IMR-90 (cell line): ENCODE measurements at regions of chr9 and their contacts with region 1.

Region 1: DNA sequence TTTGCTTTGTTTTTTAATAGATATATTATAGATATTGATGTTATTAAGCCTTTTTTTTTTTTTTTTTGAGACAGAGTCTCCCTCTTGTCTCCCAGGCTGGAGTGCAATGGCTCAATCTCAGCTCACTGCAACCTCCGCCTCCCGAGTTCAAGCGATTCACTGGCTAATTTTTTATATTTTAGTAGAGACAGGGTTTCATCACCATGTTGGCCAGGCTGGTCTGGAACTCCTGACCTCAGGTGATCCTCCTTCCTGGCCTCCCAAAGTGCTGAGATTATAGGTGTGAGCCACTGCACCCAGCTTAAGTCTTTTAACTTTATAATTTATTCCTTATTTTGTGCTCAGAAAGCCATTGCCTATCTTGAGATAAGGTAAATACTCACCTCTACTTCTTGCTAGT is 24.2 kb upstream of the RAD23B start:
- DNase-seq: no peak
- ATAC-seq: no peak
- H3K4me3 ChIP-seq: no peak overlapping the region
- H3K27ac ChIP-seq: no peak overlapping the region
- H3K4me1 ChIP-seq: peaks cover 3% of the 10 kb centered on the region
- H3K27me3 ChIP-seq: no peaks in the 10 kb centered on the region
- CTCF ChIP-seq: no peak
- POLR2A ChIP-seq: no peak
- RAD21 ChIP-seq: no peak

Region 2: GRCh38 chr9:106769331-106769730 is 489.6 kb before region 1 on chr9:
- CTCF ChIA-PET with region 1: no interaction called
- POLR2A ChIA-PET with region 1: interaction called, 12 read pairs
- dilution Hi-C with region 1: no loop called
- in situ Hi-C with region 1: no loop called
- intact Hi-C with region 1: no loop called
- DNase-seq: no peak
- ATAC-seq: no peak
- H3K4me3 ChIP-seq: no peak overlapping the region
- H3K27ac ChIP-seq: no peak overlapping the region
- H3K4me1 ChIP-seq: no peaks in the 10 kb centered on the region
- H3K27me3 ChIP-seq: peaks cover 2% of the 10 kb centered on the region
- CTCF ChIP-seq: no peak
- POLR2A ChIP-seq: no peak
- RAD21 ChIP-seq: no peak

Region 3: DNA sequence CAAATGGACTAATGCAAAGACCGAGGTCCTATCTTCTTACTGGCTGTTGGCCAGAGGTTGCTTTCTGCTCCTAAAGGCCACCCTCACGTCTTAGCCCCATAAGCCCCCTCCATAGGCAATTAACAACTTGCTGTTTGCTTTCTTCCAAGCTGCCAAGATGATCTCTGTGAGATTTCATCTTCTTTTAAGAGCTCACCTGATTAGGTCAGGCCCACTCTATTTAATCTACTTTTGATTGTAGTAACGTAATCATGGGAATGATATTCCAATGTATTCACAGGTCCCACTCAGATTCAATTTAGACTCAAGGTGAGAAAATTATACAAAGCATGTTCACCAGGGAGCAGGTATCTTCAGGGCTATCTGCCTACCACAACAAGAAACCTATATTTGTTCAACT is 60.2 kb before region 1 on chr9:
- CTCF ChIA-PET with region 1: no interaction called
- POLR2A ChIA-PET with region 1: no interaction called
- dilution Hi-C with region 1: no loop called
- in situ Hi-C with region 1: no loop called
- intact Hi-C with region 1: no loop called
- DNase-seq: no peak
- ATAC-seq: no peak
- H3K4me3 ChIP-seq: no peak overlapping the region
- H3K27ac ChIP-seq: no peak overlapping the region
- H3K4me1 ChIP-seq: no peaks in the 10 kb centered on the region
- H3K27me3 ChIP-seq: peaks cover 2% of the 10 kb centered on the region
- CTCF ChIP-seq: no peak
- POLR2A ChIP-seq: no peak
- RAD21 ChIP-seq: no peak

Region 4: GRCh38 chr9:107280520-107280919 is 21.6 kb after region 1 on chr9:
- CTCF ChIA-PET with region 1: no interaction called
- POLR2A ChIA-PET with region 1: no interaction called
- dilution Hi-C with region 1: no loop called
- in situ Hi-C with region 1: no loop called
- intact Hi-C with region 1: no loop called
- DNase-seq: peak; percentile 52
- ATAC-seq: no peak
- H3K4me3 ChIP-seq: no peak overlapping the region
- H3K27ac ChIP-seq: no peak overlapping the region
- H3K4me1 ChIP-seq: peaks cover 12% of the 10 kb centered on the region
- H3K27me3 ChIP-seq: no peaks in the 10 kb centered on the region
- CTCF ChIP-seq: no peak
- POLR2A ChIP-seq: no peak
- RAD21 ChIP-seq: no peak